ENCODE measurements at regions of chr2 and their contacts with region 1.

Region 1: DNA sequence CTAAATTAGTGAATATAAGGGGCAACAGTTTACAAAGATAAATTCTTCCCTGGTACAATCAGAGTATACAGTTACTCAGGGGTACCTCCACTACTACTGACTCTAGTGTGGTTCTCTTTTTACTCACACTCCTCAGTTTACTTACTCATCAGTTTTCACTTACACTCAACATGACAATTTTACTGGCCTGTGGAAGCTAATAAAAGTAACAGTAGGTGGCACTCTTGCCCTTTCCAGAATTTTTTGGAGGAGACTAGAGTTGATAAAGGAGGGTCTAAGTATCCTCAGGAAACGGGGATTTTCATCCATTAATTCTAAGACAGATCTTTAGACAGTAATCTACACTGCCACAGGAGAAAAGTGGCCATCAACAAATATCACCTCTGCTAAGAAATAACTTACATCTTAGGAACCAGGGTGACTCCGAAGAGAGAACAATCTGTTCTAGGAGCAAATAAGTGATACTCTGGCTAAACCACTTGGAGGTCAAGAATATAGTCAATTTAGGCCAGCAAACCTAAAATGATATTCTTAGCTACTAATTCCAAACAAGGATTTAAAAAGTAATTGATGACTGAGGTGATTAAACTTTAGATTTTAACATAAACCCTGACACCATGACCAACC is 61.3 kb downstream of the ATL2 start:
- DNase-seq: no peak
- ATAC-seq: peak; percentile 67
- H3K4me3 Mint-ChIP-seq: no peak overlapping the region
- H3K27ac Mint-ChIP-seq: no peak overlapping the region
- H3K4me1 Mint-ChIP-seq: peaks cover 8% of the 10 kb centered on the region
- H3K27me3 Mint-ChIP-seq: no peaks in the 10 kb centered on the region

Region 2: DNA sequence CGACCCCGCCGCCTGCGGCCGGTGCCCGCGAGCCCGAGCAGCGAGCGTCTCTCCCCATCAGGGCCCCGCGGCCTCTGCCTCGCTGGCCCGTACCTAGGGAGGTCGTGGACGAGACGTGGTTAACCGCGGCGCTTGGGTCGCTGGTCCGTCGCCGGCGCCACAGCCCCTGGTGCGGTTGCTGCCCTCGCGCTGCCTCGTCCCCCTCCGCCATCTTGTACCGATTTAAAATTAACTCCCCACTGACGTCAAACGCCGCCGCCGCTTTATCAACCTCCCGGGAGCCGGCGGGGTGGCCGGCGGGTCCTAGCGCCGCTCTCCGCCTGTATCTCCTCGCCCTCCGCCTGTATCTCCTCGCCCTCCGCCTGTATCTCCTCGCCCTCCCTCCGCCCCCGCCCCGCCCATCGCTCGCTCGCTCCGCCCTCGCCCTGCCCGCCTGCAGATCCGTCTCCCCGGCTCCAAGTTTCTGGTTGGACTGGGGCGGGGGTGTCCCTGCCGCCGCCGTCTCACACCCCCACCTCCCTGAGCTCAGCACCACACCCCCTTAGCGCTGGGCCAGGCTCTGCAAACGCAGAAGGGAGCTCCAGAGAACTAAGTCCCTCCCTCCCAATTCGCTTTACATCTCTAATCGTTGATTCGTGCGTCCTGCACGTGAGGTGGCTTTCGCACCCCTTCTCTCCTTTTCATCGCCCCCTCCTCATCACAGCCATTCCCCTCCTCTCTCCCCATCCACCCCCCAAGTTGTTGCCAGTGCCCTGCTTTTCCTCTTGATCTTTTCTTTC is 61.4 kb after region 1 on chr2 and contains the start of gene ATL2:
- CTCF ChIA-PET with region 1: interaction called, 17 read pairs
- DNase-seq: peak; percentile 97
- ATAC-seq: peak; percentile 92
- H3K4me3 Mint-ChIP-seq: peak within 1 kb of the TSS; percentile 87
- H3K27ac Mint-ChIP-seq: peak within 1 kb of the TSS; percentile 85
- H3K4me1 Mint-ChIP-seq: peaks cover 47% of the 10 kb centered on the region
- H3K27me3 Mint-ChIP-seq: peaks cover 6% of the 10 kb centered on the region
- total RNA-seq, gene ATL2: 55.5 to 56.7 TPM

Region 3: GRCh38 chr2:38448692-38449410 is 133.0 kb after region 1 on chr2:
- CTCF ChIA-PET with region 1: no interaction called
- DNase-seq: no peak
- ATAC-seq: no peak
- H3K4me3 Mint-ChIP-seq: no peak overlapping the region
- H3K27ac Mint-ChIP-seq: no peak overlapping the region
- H3K4me1 Mint-ChIP-seq: no peaks in the 10 kb centered on the region
- H3K27me3 Mint-ChIP-seq: peaks cover 18% of the 10 kb centered on the region

Region 4: GRCh38 chr2:38465789-38466127 is 149.9 kb after region 1 on chr2:
- CTCF ChIA-PET with region 1: interaction called, 19 read pairs
- DNase-seq: no peak
- ATAC-seq: peak; percentile 58
- H3K4me3 Mint-ChIP-seq: no peak overlapping the region
- H3K27ac Mint-ChIP-seq: no peak overlapping the region
- H3K4me1 Mint-ChIP-seq: peaks cover 4% of the 10 kb centered on the region
- H3K27me3 Mint-ChIP-seq: peaks cover 24% of the 10 kb centered on the region

Region 5: DNA sequence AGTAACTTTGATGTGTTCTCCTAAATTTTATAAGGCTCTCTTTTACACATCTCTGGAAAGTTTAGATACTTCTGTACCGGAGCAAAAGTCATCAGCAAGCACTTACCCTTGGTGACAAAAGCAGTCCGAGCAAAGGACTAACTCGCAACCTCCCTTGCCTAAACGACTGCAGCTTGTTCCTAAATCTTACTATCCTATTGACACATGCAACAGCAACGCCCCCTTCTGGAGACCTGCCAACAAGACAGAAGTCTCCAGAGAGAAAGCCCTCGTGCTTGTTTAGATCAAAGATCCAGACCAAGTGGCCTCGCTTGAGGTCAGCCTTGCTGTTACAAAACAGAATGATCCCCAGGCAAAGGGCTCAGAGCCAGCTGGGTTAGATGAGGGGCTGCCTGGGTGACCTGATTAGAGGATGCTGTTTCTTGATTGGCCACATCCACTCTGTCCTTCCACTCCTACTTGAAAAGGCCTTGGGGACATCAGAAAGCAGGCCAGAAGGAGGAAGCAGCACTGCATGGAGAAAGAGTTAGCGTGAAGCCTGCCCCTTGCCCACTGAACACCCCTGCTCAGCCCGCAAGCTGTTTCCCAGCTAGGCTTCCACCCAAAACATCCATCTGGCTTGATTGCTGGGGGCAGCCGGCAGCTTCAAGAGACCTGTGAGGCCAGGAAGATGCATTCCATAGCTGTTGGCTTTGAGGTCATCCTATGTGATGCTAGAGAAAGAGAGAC is 192.7 kb after region 1 on chr2:
- CTCF ChIA-PET with region 1: interaction called, 92 read pairs
- DNase-seq: peak; percentile 88
- ATAC-seq: peak; percentile 92
- H3K4me3 Mint-ChIP-seq: no peak overlapping the region
- H3K27ac Mint-ChIP-seq: no peak overlapping the region
- H3K4me1 Mint-ChIP-seq: peaks cover 14% of the 10 kb centered on the region
- H3K27me3 Mint-ChIP-seq: peaks cover 3% of the 10 kb centered on the region